Activated CD4-positive, alpha-beta T cell treated with anti-CD3 and anti-CD28 coated beads for 36 hours (primary cell): ENCODE measurements at regions of chr18 and their contacts with region 1.

Region 1: DNA sequence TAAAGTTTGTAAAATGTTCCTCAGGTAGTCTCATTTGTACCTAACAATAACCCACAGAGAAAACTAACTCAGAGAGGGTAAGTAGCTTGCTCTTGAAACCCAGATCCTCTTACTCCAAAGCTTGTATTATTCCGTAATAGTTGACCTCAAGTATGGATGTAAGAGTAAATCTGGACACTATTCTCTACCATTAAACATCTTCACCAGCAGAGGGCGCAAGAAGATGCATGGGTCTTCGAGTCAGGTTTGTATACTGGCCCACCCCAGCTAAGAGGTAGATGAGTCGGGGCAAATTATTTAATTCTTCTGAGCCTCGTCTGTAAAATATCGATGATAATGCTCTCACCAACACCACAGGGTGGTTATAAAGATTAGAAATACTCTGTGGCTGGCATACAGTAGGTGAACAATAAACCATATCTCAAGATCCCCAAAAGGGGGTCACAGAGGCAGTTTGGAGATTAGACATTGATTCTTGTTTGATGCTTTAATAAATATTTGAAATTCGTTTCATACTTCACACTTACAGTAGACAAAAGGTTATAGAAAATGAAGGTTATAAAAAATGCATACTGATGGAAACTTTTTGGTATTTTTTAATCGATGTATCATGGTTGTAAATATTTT is 3.5 kb upstream of the CABLES1 start:
- DNase-seq: peak; percentile 69
- ATAC-seq: no peak
- H3K4me3 Mint-ChIP-seq: no peak overlapping the region
- H3K27ac Mint-ChIP-seq: no peak overlapping the region
- H3K4me1 Mint-ChIP-seq: peaks cover 12% of the 10 kb centered on the region
- H3K27me3 Mint-ChIP-seq: peaks cover 17% of the 10 kb centered on the region

Region 2: DNA sequence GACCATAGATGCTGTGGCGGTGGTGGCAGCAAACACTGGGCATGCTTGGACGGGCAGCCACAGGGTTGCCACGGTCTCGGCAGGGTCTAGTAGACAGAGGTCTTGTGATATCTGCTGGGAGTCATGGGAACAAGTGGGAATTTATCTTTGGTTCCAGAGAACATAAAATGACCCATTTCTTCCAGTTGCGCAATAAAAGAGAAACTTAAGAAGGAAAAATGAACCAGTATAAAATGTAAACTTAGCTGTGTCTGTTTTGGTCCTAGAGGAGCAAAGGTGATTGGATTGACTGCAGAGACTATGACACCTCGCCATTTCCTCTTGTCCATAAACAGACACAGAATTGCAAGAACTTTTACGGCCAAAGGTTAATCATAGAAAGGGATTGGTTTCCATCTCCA is 331.3 kb before region 1 on chr18:
- CTCF ChIA-PET with region 1: no interaction called
- POLR2A ChIA-PET with region 1: no interaction called
- intact Hi-C with region 1: loop called in 1 of 2 experiments (anchors 5 kb)
- DNase-seq: no peak
- ATAC-seq: no peak
- H3K4me3 Mint-ChIP-seq: no peak overlapping the region
- H3K27ac Mint-ChIP-seq: no peak overlapping the region
- H3K4me1 Mint-ChIP-seq: no peaks in the 10 kb centered on the region
- H3K27me3 Mint-ChIP-seq: peaks cover 2% of the 10 kb centered on the region

Region 3: DNA sequence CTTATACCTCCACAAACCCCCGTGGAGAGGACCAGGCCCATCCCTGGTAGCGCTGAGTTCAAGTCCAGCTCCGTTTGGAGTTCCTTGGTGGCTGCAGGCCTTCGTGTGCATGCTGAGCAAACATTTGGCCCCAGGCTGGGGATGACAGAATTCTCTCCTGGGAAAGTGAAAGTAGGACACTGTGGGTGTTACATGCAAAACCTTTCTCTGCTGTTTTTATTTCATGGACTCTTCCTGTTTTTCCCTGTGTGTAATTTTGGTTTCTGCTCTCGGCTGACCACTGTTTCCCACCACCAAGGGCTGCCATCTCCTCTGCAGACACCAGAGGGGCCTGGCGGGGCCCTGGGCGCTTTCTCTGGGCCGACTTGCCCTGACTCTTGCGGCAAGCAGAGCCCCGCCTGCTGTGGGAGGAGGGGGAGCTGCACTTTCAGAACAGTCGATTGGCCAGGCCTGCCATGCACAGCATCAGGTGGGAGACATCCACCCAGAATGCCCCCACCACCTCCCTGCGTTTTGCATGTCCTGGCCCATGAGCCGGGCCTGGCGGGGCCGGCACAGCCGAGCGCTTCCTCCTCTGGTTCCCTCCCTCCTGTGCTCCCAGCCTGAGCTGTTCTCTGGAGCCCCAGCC is 105.8 kb after region 1 on chr18:
- CTCF ChIA-PET with region 1: interaction called, 4 read pairs
- POLR2A ChIA-PET with region 1: no interaction called
- intact Hi-C with region 1: loop called (anchors 2 to 10 kb)
- DNase-seq: peak; percentile 79
- ATAC-seq: peak; percentile 92
- H3K4me3 Mint-ChIP-seq: peak overlapping the region; percentile 49
- H3K27ac Mint-ChIP-seq: peak overlapping the region; percentile 77
- H3K4me1 Mint-ChIP-seq: peaks cover 26% of the 10 kb centered on the region
- H3K27me3 Mint-ChIP-seq: no peaks in the 10 kb centered on the region

Region 4: DNA sequence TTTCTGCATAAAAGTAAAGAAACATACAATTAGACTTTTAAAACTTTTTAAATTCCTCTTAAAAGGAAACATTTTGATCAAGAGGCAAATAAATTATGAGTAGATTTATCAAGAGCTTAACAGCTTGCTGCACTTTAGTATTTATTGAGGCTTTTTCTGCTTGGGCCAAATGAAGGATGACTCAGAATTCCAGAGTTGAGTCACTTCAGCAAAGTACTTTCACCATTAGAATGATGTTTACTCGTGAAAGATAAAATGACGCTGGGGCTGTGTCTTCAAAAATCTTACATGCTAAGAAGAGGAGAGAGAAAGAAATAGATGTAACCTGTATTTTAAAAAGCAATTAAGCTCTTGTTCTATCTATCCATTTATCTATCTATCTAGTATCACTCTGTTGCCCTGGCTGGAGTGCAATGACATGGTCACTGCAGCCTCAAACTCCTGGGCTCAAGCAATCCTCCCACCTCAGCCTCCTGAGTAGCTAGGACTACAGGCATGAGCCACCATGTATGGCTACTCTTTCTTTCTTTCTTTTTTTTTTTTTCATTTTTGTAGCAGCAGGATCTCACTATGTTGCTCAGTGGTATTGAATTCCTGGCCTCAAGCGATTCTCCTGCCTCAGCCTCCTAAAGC is 246.0 kb after region 1 on chr18:
- CTCF ChIA-PET with region 1: interaction called, 14 read pairs
- POLR2A ChIA-PET with region 1: no interaction called
- intact Hi-C with region 1: loop called (anchors 1 kb)
- DNase-seq: peak; percentile 11
- ATAC-seq: peak; percentile 89
- H3K4me3 Mint-ChIP-seq: no peak overlapping the region
- H3K27ac Mint-ChIP-seq: peak overlapping the region; percentile 69
- H3K4me1 Mint-ChIP-seq: peaks cover 16% of the 10 kb centered on the region
- H3K27me3 Mint-ChIP-seq: no peaks in the 10 kb centered on the region

Region 5: DNA sequence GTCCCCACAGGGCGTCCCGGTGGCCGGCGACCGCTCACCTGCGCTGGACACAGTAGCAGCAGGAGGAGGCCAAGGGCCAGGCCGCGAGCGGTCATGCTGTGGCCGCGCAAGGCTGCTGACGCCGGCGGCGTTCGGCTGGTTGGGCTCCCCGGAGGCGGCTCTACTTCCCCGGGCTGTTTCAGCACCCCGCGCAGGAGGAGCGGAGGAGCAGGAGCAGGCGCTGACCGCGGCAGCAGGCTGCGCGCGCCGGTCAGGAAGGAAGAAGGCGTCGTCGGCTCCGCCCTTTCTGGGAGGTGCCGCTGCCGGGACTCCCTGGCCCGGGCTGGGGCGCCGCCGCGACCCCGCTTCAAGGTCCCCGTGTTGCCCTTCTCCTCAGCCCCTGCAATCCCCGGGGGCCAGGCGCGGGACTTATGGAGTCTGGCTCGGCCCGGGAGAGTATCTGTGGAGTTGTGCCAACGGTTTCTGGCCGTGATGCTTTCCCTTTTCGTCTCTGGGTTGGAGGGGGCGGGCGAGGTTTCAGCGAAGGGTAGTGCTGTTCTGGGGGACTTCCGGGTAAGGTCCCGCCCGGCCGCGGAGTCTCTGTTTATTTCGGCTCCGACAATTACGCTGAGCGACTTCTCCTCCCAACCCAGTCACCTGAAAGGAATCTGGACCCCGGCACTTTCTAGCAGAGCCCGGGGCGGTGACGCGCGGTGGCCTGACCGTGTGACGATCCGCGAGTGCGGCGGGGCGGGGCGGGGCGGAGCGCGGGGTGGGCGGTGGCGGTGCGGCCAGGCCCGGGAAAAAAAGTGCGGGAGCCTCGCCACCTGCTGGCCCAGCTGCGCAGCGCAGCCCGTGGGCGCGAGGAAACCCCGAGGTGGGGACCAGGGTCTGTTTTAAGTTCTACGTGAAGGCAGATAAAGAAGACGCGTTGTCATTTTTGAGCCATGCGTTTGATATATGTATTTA is 454.7 kb after region 1 on chr18 and contains the start of gene NPC1:
- CTCF ChIA-PET with region 1: no interaction called
- POLR2A ChIA-PET with region 1: no interaction called
- intact Hi-C with region 1: loop called in 1 of 2 experiments (anchors 2 kb)
- DNase-seq: peak; percentile 95
- ATAC-seq: peak; percentile 95
- H3K4me3 Mint-ChIP-seq: peak within 1 kb of the TSS; percentile 94
- H3K27ac Mint-ChIP-seq: peak within 1 kb of the TSS; percentile 91
- H3K4me1 Mint-ChIP-seq: peaks cover 39% of the 10 kb centered on the region
- H3K27me3 Mint-ChIP-seq: no peaks in the 10 kb centered on the region
- total RNA-seq, gene NPC1: 21.6 to 29.2 TPM